GM12878 (cell line): ENCODE measurements at regions of chr18 and their contacts with region 1.

Region 1: GRCh38 chr18:4333043-4333442 is 122.1 kb downstream of the DLGAP1 start:
- DNase-seq: no peak
- ATAC-seq: peak; percentile 17; the same call in 2 of the 3 replicates
- H3K4me3 ChIP-seq: no peak overlapping the region
- H3K27ac ChIP-seq: no peak overlapping the region
- H3K4me1 ChIP-seq: no peaks in the 10 kb centered on the region
- H3K27me3 ChIP-seq: no peaks in the 10 kb centered on the region
- CTCF ChIP-seq: no peak
- EP300 ChIP-seq: no peak
- POLR2A ChIP-seq: no peak
- RAD21 ChIP-seq: no peak

Region 2: DNA sequence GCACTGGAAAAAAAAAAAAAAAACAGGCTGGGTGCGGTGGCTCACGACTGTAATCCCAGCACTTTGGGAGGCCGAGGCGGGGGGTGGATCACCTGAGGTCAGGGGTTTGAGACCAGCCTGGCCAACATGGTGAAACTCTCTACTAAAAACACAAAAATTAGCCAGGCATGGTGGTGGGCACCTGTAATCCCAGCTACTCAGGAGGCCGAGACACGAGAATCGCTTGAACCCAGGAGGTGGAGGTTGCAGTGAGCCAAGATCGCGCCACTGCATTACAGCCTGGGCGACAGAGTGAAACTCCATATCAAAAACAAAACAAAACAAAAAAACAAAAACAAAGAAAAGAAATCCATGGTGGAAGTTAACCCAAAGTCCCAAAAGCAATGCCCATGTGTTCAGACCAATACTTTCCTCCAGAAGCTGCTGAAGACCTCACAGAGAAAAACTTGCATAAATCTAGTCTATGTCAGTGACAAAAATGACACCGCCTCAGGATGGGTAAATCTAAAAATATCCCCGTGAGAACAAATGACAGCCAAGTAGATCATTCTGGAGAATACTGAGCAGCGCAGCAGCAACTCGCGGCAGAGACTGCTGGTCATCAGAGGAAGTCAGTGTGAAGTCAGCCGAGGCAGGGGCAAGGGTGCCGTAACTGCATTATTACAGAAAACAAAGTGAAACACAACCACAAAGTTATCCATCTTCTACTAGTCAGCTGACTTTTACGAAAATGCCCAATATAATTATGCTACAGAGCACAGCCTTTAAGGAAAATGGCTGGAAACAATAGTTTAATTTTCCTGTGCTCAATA is 1361.1 kb before region 1 on chr18:
- CTCF ChIA-PET with region 1: no interaction called
- POLR2A ChIA-PET with region 1: no interaction called
- RAD21 ChIA-PET with region 1: no interaction called
- SMC1A ChIA-PET with region 1: no interaction called
- in situ Hi-C with region 1: loop called (anchors 25 kb)
- intact Hi-C with region 1: no loop called
- DNase-seq: peak; percentile 90
- ATAC-seq: peak; percentile 89
- H3K4me3 ChIP-seq: peak overlapping the region; percentile 60
- H3K27ac ChIP-seq: peak overlapping the region; percentile 94
- H3K4me1 ChIP-seq: peaks cover 51% of the 10 kb centered on the region
- H3K27me3 ChIP-seq: no peaks in the 10 kb centered on the region
- CTCF ChIP-seq: no peak
- EP300 ChIP-seq: peak; percentile 32 to 48; a peak in 1 of 4 replicates
- POLR2A ChIP-seq: peak; percentile 78
- RAD21 ChIP-seq: no peak